MCF 10A (cell line): ENCODE measurements at regions of chr5 and their contacts with region 1.

Region 1: DNA sequence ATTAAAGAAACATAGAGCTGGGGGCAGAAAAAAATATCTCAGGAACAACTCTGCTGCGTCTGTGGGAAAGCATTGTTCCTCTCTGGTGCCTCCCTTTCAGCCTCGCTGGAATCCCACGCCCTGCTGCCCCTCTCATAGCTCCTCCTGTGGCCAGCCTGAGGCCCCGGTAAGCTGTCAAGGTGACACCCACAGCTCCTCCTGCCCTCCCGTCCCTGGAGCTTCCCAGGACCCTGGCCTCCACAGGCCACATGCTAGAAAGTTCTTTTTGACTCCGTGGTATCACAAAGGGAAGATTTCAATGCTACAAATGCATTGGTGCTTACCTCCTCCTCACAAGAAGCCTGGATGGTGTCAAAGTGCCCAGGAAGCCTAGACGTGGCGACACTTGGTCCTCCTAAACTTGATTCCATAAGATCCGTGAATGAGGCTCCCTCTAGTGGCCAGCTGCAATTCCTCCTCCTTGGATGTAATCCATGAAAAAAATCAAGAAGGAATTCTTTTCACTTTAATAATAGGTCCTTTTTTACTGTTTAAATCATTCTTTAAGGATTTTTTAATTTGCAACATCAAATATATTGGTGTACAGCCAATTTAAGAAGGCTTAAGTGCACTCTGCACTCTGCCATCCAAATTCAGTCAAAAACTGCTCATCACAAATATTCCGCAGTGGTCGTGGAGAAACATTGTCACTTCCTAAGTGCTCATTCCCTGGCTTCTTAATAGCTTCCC is 104.9 kb downstream of the CFAP90 start:
- DNase-seq: peak; percentile 76
- H3K4me3 Mint-ChIP-seq: no peak overlapping the region
- H3K27ac Mint-ChIP-seq: no peak overlapping the region
- H3K4me1 Mint-ChIP-seq: no peaks in the 10 kb centered on the region
- H3K27me3 Mint-ChIP-seq: peaks cover 53% of the 10 kb centered on the region
- CTCF ChIP-seq: peak; percentile 81

Region 2: GRCh38 chr5:6765612-6766525 is 980.2 kb before region 1 on chr5:
- CTCF ChIA-PET with region 1: interaction called, 24 read pairs
- POLR2A ChIA-PET with region 1: no interaction called
- intact Hi-C with region 1: loop called (anchors 1 kb)
- DNase-seq: peak; percentile 89
- H3K4me3 Mint-ChIP-seq: peak overlapping the region; percentile 65
- H3K27ac Mint-ChIP-seq: no peak overlapping the region
- H3K4me1 Mint-ChIP-seq: peaks cover 23% of the 10 kb centered on the region
- H3K27me3 Mint-ChIP-seq: no peaks in the 10 kb centered on the region
- CTCF ChIP-seq: peak; percentile 91

Region 3: GRCh38 chr5:7078901-7079300 is 667.1 kb before region 1 on chr5:
- CTCF ChIA-PET with region 1: no interaction called
- POLR2A ChIA-PET with region 1: no interaction called
- intact Hi-C with region 1: loop called (anchors 10 kb)
- DNase-seq: peak; percentile 5
- H3K4me3 Mint-ChIP-seq: no peak overlapping the region
- H3K27ac Mint-ChIP-seq: no peak overlapping the region
- H3K4me1 Mint-ChIP-seq: no peaks in the 10 kb centered on the region
- H3K27me3 Mint-ChIP-seq: peaks cover 25% of the 10 kb centered on the region
- CTCF ChIP-seq: no peak

Region 4: DNA sequence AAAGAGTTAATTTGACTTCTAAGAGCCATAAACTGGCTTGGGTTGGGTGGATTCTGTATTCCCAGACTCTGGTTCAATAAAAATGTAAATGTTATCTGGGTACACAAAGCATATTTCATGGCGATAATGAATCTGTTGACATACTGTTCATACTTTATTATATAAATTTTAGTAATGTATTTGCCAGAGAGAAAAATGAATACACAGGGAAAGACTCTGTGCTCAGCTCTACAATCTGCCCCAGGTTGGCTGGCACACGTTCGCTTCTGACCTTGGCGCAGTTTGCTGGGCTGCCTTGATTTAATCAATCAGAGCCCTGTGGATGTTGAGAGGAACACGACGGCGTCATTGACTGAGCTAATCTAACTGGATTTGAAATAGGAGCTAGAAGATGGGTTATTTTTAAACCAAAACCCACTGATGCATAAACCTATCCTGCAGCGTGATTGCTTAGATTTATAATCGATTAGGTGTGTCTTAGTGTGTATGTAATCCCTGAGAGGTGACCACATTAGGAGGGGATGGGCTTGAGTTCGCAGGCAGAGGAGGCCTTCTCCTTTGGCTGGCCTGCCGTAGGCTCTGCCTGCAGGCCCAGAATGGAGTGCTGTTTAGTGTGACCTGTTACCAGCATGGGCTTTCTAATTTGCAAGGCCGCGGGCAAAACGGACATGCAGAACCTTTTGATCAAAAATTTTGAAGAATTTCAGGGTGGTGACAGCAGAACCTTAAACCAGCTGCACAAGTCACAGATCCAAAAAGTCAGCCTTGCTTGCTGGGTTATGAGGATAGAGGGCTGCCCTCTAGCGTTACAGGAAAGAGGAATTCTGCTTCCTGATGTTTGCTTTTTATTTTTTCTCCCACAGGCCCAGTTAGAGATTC is 354.0 kb before region 1 on chr5:
- CTCF ChIA-PET with region 1: interaction called, 3 read pairs
- POLR2A ChIA-PET with region 1: no interaction called
- intact Hi-C with region 1: loop called (anchors 2 kb)
- DNase-seq: peak; percentile 5
- H3K4me3 Mint-ChIP-seq: no peak overlapping the region
- H3K27ac Mint-ChIP-seq: no peak overlapping the region
- H3K4me1 Mint-ChIP-seq: no peaks in the 10 kb centered on the region
- H3K27me3 Mint-ChIP-seq: peaks cover 3% of the 10 kb centered on the region
- CTCF ChIP-seq: peak; percentile 26

Region 5: DNA sequence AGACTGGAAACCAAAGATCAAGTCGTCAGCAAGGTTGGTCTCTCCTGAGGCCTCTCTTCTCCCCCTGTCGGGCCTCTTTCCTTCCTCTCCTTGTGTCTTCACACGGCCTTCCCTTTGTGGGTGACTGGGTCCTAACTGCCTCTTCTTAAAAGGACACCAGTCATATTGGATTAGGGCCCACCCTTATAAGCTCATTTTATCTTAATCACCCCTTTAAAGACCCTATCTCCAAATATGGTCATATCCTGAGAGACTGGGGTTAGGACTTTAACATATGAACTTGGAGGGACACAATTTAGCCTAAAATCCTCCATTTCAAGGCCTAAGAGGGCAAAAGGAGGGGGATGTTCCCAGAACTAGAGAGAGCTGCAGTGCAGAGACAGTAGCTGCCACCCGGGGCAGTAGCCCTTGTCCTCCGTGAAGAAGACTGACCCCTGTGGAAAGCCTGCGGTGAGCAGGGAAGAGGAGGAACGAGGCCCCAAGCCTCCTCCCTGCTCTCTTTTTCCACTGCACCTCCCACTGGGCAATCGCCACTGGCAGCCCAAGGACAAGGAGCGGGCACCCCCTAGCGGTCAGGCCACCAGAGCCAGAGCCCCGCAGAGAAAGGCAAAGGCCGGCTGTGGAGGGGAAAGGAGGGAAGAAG is 70.0 kb after region 1 on chr5:
- CTCF ChIA-PET with region 1: interaction called, 5 read pairs
- POLR2A ChIA-PET with region 1: no interaction called
- intact Hi-C with region 1: loop called (anchors 5 kb)
- DNase-seq: peak; percentile 75
- H3K4me3 Mint-ChIP-seq: no peak overlapping the region
- H3K27ac Mint-ChIP-seq: no peak overlapping the region
- H3K4me1 Mint-ChIP-seq: no peaks in the 10 kb centered on the region
- H3K27me3 Mint-ChIP-seq: peaks cover 61% of the 10 kb centered on the region
- CTCF ChIP-seq: peak; percentile 90

Region 6: DNA sequence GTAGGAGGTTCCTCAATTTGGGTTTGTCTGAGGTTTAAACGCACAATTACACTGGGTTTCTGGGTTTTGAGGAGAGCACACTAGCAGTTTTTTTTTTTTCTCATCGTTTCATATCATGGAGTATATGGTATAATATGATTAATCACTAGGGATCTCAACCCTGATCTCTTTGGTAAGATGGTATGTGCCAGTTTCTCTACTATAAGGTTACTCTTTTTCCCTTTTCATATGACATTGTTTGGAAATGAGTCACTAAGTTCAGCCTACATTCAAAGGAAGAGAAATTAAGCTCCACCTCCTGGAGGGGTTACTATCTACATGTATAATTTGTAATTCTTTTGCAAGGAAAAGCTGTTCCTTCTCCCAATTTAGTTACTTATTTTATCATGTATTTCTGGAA is 158.1 kb after region 1 on chr5:
- CTCF ChIA-PET with region 1: no interaction called
- POLR2A ChIA-PET with region 1: no interaction called
- intact Hi-C with region 1: no loop called
- DNase-seq: peak; percentile 67
- H3K4me3 Mint-ChIP-seq: no peak overlapping the region
- H3K27ac Mint-ChIP-seq: peak overlapping the region; percentile 57
- H3K4me1 Mint-ChIP-seq: peaks cover 14% of the 10 kb centered on the region
- H3K27me3 Mint-ChIP-seq: no peaks in the 10 kb centered on the region
- CTCF ChIP-seq: no peak

Region 7: GRCh38 chr5:8457187-8458037 is 711.4 kb after region 1 on chr5:
- CTCF ChIA-PET with region 1: no interaction called
- POLR2A ChIA-PET with region 1: no interaction called
- intact Hi-C with region 1: no loop called
- DNase-seq: peak; percentile 98
- H3K4me3 Mint-ChIP-seq: peak overlapping the region; percentile 92
- H3K27ac Mint-ChIP-seq: peak overlapping the region; percentile 83
- H3K4me1 Mint-ChIP-seq: peaks cover 14% of the 10 kb centered on the region
- H3K27me3 Mint-ChIP-seq: no peaks in the 10 kb centered on the region
- CTCF ChIP-seq: no peak